ENCODE measurements at regions of chr6 and their contacts with region 1.

Region 1: GRCh38 chr6:37705239-37706051 is 7.8 kb upstream of the MDGA1 start:
- DNase-seq: peak; percentile 82
- H3K4me3 ChIP-seq: peak overlapping the region; percentile 37 to 46 (median 46)
- H3K27ac ChIP-seq: no peak overlapping the region
- H3K4me1 ChIP-seq: peaks cover 4% of the 10 kb centered on the region
- H3K27me3 ChIP-seq: peaks cover 0 to under 1% of the 10 kb centered on the region in 2 experiments
- CTCF ChIP-seq: peak; percentile 57 to 73
- POLR2A ChIP-seq: no peak

Region 2: GRCh38 chr6:37783856-37784584 is 78.6 kb after region 1 on chr6:
- CTCF ChIA-PET with region 1: interaction called, 3 read pairs
- POLR2A ChIA-PET with region 1: no interaction called
- dilution Hi-C with region 1: no loop called
- intact Hi-C with region 1: loop called (anchors 5 kb)
- DNase-seq: peak; percentile 38
- H3K4me3 ChIP-seq: peak overlapping the region; percentile 13 to 55 (median 31)
- H3K27ac ChIP-seq: no peak overlapping the region
- H3K4me1 ChIP-seq: peaks cover 10% of the 10 kb centered on the region
- H3K27me3 ChIP-seq: peaks cover 2 to 4% of the 10 kb centered on the region in 2 experiments
- CTCF ChIP-seq: no peak
- POLR2A ChIP-seq: no peak

Region 3: DNA sequence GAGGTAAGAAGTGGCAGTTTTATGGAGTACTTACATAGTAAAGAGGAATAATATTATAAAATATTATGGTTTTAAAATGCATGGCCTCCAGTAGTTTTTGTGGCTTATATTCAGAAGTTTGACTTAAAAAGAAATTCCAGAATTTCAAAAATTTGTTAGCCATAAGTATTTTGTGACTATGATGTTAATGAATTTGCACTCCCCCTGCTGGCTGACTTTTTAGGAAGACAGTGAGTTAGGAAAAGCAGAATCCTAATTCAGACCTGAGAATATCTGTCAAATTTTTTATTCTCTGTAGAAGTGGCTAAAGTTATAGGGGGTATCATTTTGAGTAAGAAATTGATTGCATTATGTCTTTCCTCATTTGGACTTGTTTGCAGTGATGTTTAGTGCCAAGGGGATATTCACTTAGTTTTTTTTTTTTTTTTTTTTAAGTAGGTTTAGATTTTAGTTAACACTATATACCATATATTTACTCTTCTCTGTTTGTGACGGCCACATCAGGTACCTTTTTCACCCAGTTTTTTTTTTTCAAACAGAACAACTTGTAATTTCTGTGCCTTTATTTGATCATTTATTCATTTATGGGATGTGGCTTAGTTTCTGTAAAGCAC is 154.9 kb after region 1 on chr6:
- CTCF ChIA-PET with region 1: interaction called, 3 read pairs
- POLR2A ChIA-PET with region 1: no interaction called
- dilution Hi-C with region 1: no loop called
- intact Hi-C with region 1: loop called (anchors 1 kb)
- DNase-seq: peak; percentile 50
- H3K4me3 ChIP-seq: no peak overlapping the region
- H3K27ac ChIP-seq: no peak overlapping the region
- H3K4me1 ChIP-seq: peaks cover 3% of the 10 kb centered on the region
- H3K27me3 ChIP-seq: no peaks in the 10 kb centered on the region
- CTCF ChIP-seq: peak; percentile 28 to 53
- POLR2A ChIP-seq: no peak

Region 4: DNA sequence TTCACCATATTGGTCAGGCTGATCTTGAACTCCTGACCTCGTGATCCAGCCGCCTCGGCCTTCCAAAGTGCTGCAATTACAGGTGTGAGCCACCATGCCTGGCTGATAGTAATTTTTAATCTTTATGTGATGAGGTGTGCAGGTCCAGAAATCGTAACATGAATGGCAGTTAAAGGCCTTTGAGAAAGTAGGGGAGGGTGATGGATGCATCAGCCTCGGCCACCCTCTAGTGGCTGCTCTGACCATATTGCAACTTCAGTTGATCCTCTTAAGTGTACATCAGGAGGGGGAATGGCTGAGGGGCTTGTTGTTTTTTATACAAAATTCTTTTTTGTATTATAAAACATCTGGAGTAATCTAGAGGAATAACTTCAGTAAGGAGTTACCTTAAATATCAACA is 307.1 kb after region 1 on chr6:
- CTCF ChIA-PET with region 1: interaction called, 3 read pairs
- POLR2A ChIA-PET with region 1: no interaction called
- dilution Hi-C with region 1: no loop called
- intact Hi-C with region 1: loop called (anchors 1 kb)
- DNase-seq: peak; percentile 55
- H3K4me3 ChIP-seq: no peak overlapping the region
- H3K27ac ChIP-seq: no peak overlapping the region
- H3K4me1 ChIP-seq: no peaks in the 10 kb centered on the region
- H3K27me3 ChIP-seq: no peaks in the 10 kb centered on the region
- CTCF ChIP-seq: peak; percentile 56 to 70
- POLR2A ChIP-seq: no peak

Region 5: DNA sequence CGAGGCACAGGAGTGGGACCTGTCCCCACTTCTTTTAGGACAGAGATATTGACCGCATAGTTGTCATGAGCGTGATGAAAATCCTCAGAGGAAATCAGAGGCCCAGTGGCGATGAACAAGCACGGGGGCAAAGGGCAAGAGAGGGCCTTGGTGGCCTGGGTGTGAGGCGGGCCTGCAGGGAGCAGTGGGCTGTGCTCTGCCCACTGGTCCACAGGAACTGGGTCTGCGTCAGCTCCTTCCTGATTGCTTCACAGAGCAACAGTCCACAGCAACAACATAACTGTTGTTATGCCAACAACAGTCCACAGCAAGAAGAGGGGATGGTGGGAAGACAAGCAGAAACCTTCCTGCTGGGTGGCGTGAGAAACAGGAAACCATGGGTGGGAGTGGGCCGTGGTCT is 449.7 kb after region 1 on chr6:
- CTCF ChIA-PET with region 1: no interaction called
- POLR2A ChIA-PET with region 1: no interaction called
- dilution Hi-C with region 1: no loop called
- intact Hi-C with region 1: loop called (anchors 10 kb)
- DNase-seq: peak; percentile 94
- H3K4me3 ChIP-seq: no peak overlapping the region
- H3K27ac ChIP-seq: peak overlapping the region; percentile 100
- H3K4me1 ChIP-seq: peaks cover 21% of the 10 kb centered on the region
- H3K27me3 ChIP-seq: no peaks in the 10 kb centered on the region
- CTCF ChIP-seq: no peak
- POLR2A ChIP-seq: no peak

Region 6: DNA sequence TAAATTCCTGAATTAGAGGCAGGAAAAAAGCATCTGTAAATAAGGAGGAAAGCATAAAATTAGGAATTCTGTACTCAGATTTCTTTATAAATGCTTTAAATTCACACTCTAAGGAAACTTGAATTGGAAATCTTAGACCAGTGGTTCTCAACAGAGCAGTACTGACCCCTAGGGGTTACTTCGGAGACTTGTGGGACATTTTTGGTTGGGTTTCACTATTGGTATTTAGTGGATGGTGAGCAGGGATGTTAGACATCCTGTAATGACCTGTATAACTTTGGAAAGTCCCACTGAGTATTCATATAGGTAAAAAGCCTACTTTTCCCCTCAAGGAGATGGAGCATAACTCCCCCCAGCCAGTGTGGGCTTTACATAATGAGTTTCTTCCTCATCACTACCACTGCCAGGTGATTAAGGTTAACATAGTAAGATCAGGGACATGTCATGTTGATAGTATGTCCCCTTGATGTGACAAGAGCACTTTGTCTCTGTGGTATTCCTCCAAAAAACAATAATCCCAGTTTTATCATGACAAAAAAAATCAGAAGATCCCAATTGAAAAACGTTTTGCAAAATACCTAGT is 966.5 kb after region 1 on chr6:
- CTCF ChIA-PET with region 1: interaction called, 4 read pairs
- POLR2A ChIA-PET with region 1: no interaction called
- dilution Hi-C with region 1: no loop called
- intact Hi-C with region 1: loop called (anchors 2 kb)
- DNase-seq: peak; percentile 60
- H3K4me3 ChIP-seq: no peak overlapping the region
- H3K27ac ChIP-seq: no peak overlapping the region
- H3K4me1 ChIP-seq: peaks cover 15% of the 10 kb centered on the region
- H3K27me3 ChIP-seq: no peaks in the 10 kb centered on the region
- CTCF ChIP-seq: peak; percentile 55 to 60
- POLR2A ChIP-seq: no peak

Measured in endothelial cell of umbilical vein (primary cell).